Psoas muscle (tissue), 8 donors: ENCODE measurements at regions of chr19 and their contacts with region 1.

Region 1: GRCh38 chr19:1999856-2000515 is 15.5 kb downstream of the BTBD2 start:
- DNase-seq: no peak
- ATAC-seq: peak in 2 of 4 donors; percentile 23 to 26
- H3K4me3 ChIP-seq: no peak overlapping the region
- H3K27ac ChIP-seq: no peak overlapping the region
- H3K4me1 ChIP-seq: no peaks in the 10 kb centered on the region
- H3K27me3 ChIP-seq: no peaks in the 10 kb centered on the region
- CTCF ChIP-seq: no peak

Region 2: GRCh38 chr19:1970003-1970805 is 29.8 kb before region 1 on chr19:
- intact Hi-C with region 1: loop called in 1 of 2 experiments (anchors 5 kb)
- DNase-seq: peak in 1 of 2 donors; percentile 44
- ATAC-seq: peak in 2 of 4 donors; percentile 14 to 27
- H3K4me3 ChIP-seq: no peak overlapping the region
- H3K27ac ChIP-seq: no peak overlapping the region
- H3K4me1 ChIP-seq: no peaks in the 10 kb centered on the region
- H3K27me3 ChIP-seq: no peaks in the 10 kb centered on the region
- CTCF ChIP-seq: no peak

Region 3: GRCh38 chr19:1980091-1980808 is 19.7 kb before region 1 on chr19:
- intact Hi-C with region 1: no loop called
- DNase-seq: no peak
- ATAC-seq: no peak
- H3K4me3 ChIP-seq: no peak overlapping the region
- H3K27ac ChIP-seq: no peak overlapping the region
- H3K4me1 ChIP-seq: no peaks in the 10 kb centered on the region
- H3K27me3 ChIP-seq: no peaks in the 10 kb centered on the region
- CTCF ChIP-seq: no peak